Heart right ventricle (tissue), 16 donors: ENCODE measurements at regions of chr19 and their contacts with region 1.

Region 1: DNA sequence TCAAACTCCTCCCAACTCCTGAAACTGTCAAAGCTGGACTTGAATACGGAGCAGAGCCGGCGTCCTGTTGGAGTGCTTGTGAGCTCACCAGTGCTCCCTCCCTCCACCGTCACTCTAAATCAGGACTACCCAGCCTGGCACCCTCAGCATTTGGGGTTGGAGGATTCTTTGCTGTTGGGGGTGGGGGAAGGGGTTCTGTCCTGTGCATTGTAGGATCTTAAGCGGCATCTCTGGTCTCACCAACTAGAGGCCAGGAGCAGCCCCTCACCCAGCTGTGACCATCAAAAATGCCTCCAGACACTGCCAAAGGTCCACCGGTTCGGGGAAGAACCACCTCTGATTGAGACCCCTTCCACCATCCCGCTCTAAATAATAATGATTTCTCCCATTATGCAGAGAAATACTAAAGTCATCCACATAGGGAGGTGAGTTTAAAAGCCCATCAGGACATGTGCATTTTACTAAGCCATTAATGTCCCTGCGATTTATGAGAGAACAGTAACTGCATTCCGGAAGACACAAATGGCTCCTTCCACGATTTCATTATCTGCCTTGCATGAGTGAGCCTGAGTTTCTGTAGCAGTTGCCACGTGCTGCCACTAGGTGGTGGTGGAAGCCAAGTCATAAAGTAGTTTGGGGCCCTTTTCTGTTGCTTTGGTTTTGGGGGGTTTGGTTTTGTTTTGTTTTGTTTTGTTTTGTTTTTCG is 16.1 kb upstream of the USP29 start:
- DNase-seq: peak; percentile 39 to 47
- ATAC-seq: peak in 7 of 8 donors; percentile 45 to 73 (median 67)
- H3K4me3 ChIP-seq: peak overlapping the region in 6 of 10 donors; percentile 2 to 25 (median 16)
- H3K27ac ChIP-seq: no peak overlapping the region
- H3K4me1 ChIP-seq: peaks cover 0 to 9% (median 0%) of the 10 kb centered on the region in 9 donors
- H3K27me3 ChIP-seq: peaks cover 0 to 55% (median 27%) of the 10 kb centered on the region in 7 donors
- CTCF ChIP-seq: peak; percentile 77 to 91 (median 87)

Region 2: DNA sequence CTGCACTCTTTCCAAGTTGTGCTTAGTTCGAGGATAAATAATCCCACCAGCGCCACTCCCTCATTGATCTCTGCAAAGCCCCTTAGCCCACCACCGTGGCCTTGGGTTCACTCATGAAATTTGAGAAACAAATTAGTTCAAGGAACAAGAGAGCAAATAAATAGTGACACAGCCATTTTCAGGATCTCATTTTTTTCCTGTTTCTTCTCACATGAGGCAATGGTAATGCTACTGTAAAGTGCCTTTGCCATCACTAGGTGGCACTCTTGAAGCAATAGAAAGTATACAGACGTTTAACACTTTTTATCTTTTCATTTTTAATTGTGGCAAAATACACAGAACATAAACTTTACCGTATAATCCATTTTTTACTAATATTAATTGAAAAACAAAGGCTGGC is 355.3 kb before region 1 on chr19:
- intact Hi-C with region 1: loop called (anchors 2 to 10 kb)
- DNase-seq: no peak
- ATAC-seq: no peak
- H3K4me3 ChIP-seq: no peak overlapping the region
- H3K27ac ChIP-seq: no peak overlapping the region
- H3K4me1 ChIP-seq: no peaks in the 10 kb centered on the region
- H3K27me3 ChIP-seq: peaks cover 0 to 20% (median 4%) of the 10 kb centered on the region in 7 donors
- CTCF ChIP-seq: peak; percentile 23 to 75 (median 61)

Region 3: DNA sequence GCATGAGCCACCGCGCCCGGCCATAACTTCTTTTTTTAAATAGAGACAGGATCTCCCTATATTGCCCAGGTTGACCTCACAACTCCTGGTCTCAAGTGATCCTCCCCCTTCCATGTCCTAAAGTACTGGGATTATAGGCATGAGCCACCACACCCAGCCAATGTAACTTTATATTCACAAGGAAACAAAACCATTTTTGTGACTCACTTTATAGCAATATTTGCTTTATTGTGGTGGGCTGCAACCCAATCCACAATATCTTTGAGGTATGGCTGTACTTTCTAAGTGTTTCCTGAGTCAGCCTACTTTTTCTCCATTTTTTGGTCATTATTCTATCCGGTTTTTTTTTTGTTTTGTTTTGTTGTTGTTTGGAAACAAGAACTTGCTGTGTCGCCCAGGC is 49.2 kb after region 1 on chr19:
- intact Hi-C with region 1: no loop called
- DNase-seq: no peak
- ATAC-seq: no peak
- H3K4me3 ChIP-seq: no peak overlapping the region
- H3K27ac ChIP-seq: no peak overlapping the region
- H3K4me1 ChIP-seq: no peaks in the 10 kb centered on the region
- H3K27me3 ChIP-seq: peaks cover 0 to 4% (median 0%) of the 10 kb centered on the region in 7 donors
- CTCF ChIP-seq: no peak

Region 4: DNA sequence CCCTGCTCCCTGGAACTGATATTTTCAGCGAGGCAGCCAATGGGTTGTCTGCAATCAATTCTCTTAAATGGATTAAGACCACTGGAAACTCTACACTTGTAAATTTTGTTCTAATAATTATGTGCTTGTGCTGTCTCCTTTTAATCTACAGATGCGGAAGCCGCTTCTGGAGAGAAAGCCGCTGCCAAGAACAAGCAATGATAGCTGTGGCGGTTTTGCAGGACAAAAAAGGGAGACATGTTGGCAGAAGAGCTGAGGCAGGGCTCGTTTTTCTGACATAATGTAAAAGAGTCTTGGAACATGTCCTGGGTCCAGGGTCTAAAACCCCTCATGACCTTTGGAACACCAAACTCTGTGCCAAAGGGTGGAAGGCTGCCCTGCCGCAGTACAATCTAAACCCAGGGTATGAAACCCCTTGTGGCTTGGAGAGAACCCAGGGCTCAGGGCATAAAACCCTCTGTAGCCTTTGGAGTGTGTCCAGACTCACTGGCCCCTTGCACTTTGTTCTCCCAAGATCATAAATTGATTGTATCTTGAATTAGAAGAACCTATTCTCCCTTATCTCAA is 800.0 kb after region 1 on chr19:
- intact Hi-C with region 1: loop called in 1 of 10 experiments (anchors 5 kb)
- DNase-seq: no peak
- ATAC-seq: no peak
- H3K4me3 ChIP-seq: no peak overlapping the region
- H3K27ac ChIP-seq: no peak overlapping the region
- H3K4me1 ChIP-seq: peaks cover 0 to 5% (median 0%) of the 10 kb centered on the region in 9 donors
- H3K27me3 ChIP-seq: no peaks in the 10 kb centered on the region
- CTCF ChIP-seq: no peak